ENCODE measurements at regions of chr1 and their contacts with region 1.

Region 1: GRCh38 chr1:168439456-168440375 is 104.1 kb downstream of the XCL2 start:
- DNase-seq: peak; percentile 58 to 92 (median 84)
- ATAC-seq: peak; percentile 79 to 92
- H3K4me3 Mint-ChIP-seq: peak overlapping the region; percentile 72 to 91 (median 85)
- H3K27ac Mint-ChIP-seq: peak overlapping the region; percentile 63 to 95 (median 88)
- H3K4me1 Mint-ChIP-seq: peaks cover 44 to 62% (median 55%) of the 10 kb centered on the region in 4 donors
- H3K27me3 Mint-ChIP-seq: no peaks in the 10 kb centered on the region

Region 2: DNA sequence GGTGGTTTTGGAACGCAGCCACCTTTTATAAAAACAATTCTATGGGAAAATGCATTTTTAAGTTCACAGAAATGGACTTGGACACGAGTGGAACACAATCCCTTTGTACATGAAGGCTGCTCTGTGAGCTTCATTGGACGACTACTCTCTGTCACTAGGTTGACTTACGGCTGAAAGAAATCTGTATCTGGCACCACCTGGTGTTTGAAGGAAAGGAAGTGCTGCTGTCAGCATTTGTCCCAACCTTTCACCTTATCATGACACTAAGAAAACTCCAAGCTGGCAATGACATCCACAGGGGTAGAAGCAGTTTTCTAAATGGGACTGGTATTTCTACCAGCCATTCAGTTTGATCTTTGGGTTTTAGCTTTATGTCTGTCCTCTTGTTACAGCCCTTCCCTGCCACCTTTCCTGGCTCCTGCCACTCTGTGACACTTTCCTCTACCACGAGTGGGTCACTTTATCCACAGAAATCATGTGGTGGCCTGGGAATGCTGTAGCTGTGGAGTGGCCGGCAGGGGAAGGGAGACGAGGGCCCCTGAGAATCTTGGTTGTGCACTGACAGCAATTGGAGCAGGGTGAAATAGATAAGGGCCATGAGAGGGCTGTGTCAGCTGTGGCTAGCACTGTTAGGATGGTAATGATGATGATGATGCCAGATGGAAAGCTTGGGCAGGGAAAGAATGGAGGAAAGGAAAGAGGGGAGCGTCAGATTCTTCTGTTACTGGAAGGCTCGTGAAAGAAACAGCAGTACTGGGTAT is 73.8 kb before region 1 on chr1:
- POLR2A ChIA-PET with region 1: no interaction called
- DNase-seq: peak in 1 of 10 donors; percentile 20
- ATAC-seq: no peak
- H3K4me3 Mint-ChIP-seq: no peak overlapping the region
- H3K27ac Mint-ChIP-seq: peak overlapping the region in 1 of 10 donors; percentile 1
- H3K4me1 Mint-ChIP-seq: peaks cover 10 to 30% (median 15%) of the 10 kb centered on the region in 4 donors
- H3K27me3 Mint-ChIP-seq: peaks cover 0 to 13% (median 5%) of the 10 kb centered on the region in 5 donors

Region 3: DNA sequence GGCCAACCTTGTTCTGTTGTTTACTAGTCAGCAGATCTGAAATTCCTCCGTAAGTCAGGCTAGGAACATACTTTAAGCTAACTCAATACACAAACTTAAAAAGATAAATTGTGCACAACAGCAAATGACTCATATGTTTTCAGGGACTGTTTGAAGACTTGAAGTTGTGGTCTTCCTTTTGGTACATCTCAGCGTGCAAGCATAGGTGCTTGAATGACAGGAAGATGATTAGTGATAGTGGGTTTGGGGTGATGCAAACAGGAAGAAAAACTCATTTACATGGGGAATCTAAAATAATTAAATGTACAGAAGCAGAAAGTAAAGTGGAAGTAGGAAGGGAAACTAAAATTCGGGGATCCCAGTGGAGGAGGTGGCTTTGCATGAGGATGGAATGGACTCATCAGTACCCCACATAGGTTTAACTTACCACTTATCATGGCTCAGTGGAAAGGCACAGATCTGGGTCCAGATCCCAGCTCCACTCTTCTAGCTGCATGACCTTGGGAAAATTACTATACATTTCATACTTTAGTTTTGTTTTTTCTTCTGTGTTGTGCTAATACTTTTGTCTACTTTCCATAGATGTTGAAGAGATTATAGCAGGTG is 18.2 kb before region 1 on chr1:
- POLR2A ChIA-PET with region 1: no interaction called
- DNase-seq: peak in 4 of 10 donors; percentile 11 to 52 (median 24)
- ATAC-seq: peak; percentile 93 to 95
- H3K4me3 Mint-ChIP-seq: peak overlapping the region in 7 of 10 donors; percentile 8 to 64 (median 19)
- H3K27ac Mint-ChIP-seq: peak overlapping the region; percentile 1 to 88 (median 54)
- H3K4me1 Mint-ChIP-seq: peaks cover 7 to 33% (median 17%) of the 10 kb centered on the region in 4 donors
- H3K27me3 Mint-ChIP-seq: no peaks in the 10 kb centered on the region

Region 4: DNA sequence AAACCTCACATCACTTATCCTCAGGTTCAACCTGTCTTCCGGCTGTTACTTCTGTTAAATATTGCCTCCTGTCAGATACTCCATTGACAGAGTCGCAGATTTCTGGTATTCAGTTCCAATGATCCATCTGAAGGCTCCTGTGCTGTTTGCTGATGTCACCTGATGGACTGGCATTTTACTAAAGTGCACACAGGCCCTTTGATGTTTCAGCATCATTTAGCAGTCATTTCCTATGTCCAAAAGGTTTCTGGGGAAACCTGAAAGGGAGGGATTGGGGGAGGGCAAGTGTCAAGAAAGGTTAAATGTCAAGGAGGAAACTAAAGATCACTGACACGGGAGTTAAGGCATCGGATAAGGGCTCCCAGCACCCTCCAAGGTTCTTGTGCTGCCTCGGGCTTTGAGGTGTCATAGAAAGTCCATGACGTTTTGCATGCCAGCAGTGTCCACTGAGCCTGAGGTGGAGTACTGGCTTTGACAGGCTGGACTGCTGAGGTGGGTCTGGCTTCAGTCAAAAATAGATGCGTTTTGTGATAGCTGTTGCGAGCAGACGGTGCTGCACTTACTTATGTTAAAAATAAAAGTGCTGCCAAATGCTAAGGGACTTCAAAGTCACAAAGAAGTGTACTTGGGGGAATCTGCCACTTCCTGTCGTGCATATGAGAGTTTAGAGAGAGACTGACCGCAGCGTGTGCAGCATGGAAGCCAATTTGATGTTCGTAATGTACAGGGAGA is 73.3 kb after region 1 on chr1:
- POLR2A ChIA-PET with region 1: interaction called, 21 read pairs
- DNase-seq: peak in 8 of 10 donors; percentile 18 to 71 (median 54)
- ATAC-seq: peak; percentile 83 to 84
- H3K4me3 Mint-ChIP-seq: peak overlapping the region; percentile 61 to 90 (median 78)
- H3K27ac Mint-ChIP-seq: peak overlapping the region; percentile 85 to 96 (median 90)
- H3K4me1 Mint-ChIP-seq: peaks cover 55 to 80% (median 77%) of the 10 kb centered on the region in 4 donors
- H3K27me3 Mint-ChIP-seq: no peaks in the 10 kb centered on the region